ENCODE measurements at regions of chr5 and their contacts with region 1.

Region 1: GRCh38 chr5:170747851-170748250 is 35.7 kb upstream of the GABRP start:
- DNase-seq: no peak
- H3K4me3 ChIP-seq: no peak overlapping the region
- H3K27me3 ChIP-seq: peaks cover 13% of the 10 kb centered on the region; the same call in 1 of the 2 replicates
- CTCF ChIP-seq: peak; percentile 45

Region 2: GRCh38 chr5:170651604-170652277 is 96.1 kb before region 1 on chr5:
- CTCF ChIA-PET with region 1: no interaction called
- POLR2A ChIA-PET with region 1: no interaction called
- DNase-seq: no peak
- H3K4me3 ChIP-seq: no peak overlapping the region
- H3K27me3 ChIP-seq: no peaks in the 10 kb centered on the region
- CTCF ChIP-seq: no peak

Region 3: DNA sequence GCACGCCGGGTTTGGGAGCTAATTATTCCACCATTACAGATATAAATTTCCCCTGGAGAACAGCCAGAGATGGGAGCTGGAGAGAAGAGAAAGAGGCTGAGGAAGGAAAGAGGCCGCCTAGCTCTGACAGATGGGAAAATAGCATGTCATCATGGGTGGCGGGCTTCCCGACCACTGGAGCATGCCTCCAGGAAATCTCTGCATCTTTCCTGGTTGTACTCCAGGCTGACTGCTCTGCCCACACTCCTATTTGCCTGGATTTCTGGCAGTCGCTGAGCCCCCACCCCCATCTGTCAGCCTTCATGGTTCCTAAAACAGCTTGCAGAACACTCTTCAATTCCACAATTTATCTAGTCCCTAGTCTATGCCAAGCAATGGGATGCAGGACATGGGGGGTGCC is 21.4 kb after region 1 on chr5:
- CTCF ChIA-PET with region 1: interaction called, 11 read pairs
- POLR2A ChIA-PET with region 1: no interaction called
- DNase-seq: no peak
- H3K4me3 ChIP-seq: no peak overlapping the region
- H3K27me3 ChIP-seq: peaks cover 2% of the 10 kb centered on the region
- CTCF ChIP-seq: no peak

Region 4: DNA sequence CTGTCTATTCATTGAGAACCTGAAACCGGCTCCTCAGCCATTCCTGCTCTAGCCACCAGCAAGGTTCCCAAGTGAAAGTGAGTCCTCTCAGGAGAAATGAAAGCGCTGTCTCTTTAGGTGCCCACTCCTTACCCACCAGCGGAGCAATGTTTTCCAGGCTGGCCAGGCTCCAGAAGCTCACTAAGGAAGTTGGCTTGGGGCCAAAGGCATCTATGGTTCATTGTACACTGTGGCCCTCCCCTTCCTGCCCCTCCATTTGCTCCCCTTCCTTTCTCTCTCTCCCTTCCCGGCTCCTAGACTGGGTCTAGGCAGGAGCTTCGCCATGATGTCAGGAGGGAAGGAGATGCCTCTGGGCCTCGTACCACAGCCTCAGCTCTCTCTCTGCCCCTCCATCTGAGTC is 34.6 kb after region 1 on chr5:
- CTCF ChIA-PET with region 1: interaction called, 220 read pairs
- POLR2A ChIA-PET with region 1: no interaction called
- DNase-seq: no peak
- H3K4me3 ChIP-seq: no peak overlapping the region
- H3K27me3 ChIP-seq: no peaks in the 10 kb centered on the region
- CTCF ChIP-seq: no peak

Region 5: DNA sequence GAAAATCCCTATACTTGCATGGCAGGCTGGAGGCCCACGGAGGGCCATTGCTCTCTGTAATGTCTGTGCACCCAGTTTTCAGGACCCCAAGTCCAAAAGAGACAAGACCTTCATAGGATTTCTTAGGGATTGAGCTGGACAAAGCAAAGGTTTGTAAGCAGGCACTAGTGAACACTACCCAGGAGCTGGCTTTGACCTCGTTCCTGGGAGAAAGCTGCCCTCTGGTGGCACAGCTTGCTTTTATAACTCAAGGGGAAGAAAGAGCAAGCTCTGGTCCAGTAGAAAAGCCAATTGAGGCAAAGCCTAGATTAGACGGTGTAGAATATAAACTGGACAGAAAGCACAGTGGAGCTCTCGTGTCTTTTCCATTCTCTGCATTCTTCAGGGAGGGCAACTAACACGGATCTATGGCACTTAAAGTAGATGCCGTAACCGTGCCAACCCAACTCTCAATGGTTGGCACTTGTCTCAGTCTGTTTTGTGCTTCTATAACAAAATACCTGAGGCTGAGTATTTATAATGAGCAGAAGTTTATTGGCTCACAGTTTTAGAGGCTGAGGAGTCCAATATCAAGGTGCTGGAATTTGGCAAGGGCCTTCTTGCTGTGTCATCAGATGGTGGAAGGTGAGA is 43.6 kb after region 1 on chr5:
- CTCF ChIA-PET with region 1: interaction called, 220 read pairs
- POLR2A ChIA-PET with region 1: no interaction called
- DNase-seq: no peak
- H3K4me3 ChIP-seq: no peak overlapping the region
- H3K27me3 ChIP-seq: no peaks in the 10 kb centered on the region
- CTCF ChIP-seq: peak; percentile 63